Activated CD4-positive, alpha-beta memory T cell treated with anti-CD3 and anti-CD28 coated beads for 36 hours (primary cell): ENCODE measurements at regions of chr12 and their contacts with region 1.

Region 1: GRCh38 chr12:109385339-109386067 is 37.8 kb downstream of the MYO1H start:
- DNase-seq: peak; percentile 11
- H3K4me3 Mint-ChIP-seq: no peak overlapping the region
- H3K27ac Mint-ChIP-seq: no peak overlapping the region
- H3K4me1 Mint-ChIP-seq: no peaks in the 10 kb centered on the region
- H3K27me3 Mint-ChIP-seq: peaks cover 21% of the 10 kb centered on the region

Region 2: DNA sequence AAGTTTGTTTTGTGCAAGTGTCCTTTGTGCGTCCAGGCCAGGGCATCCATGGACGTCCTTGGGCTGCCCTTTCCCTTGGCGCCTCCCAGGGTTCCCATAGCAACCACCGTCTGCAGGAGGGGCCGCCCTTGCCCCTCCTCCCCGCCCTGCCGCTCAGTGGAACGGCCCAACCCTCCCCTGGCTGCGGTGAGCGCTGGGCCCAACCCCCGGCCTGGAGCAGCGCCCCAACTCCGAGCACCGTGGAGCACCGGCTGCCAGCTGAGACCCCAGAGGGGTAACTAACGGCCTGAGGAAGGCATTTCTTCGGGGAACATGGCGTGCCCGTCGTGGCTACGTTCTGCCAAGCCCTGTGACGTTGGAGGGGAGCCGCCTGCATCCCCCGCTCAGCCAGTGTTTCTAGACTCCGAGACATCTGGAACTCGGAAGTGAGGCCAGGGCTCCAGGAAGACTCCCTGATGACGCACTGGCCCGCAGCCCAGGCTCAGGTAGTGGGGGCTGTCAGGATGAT is 274.5 kb before region 1 on chr12:
- CTCF ChIA-PET with region 1: interaction called, 20 read pairs
- POLR2A ChIA-PET with region 1: no interaction called
- intact Hi-C with region 1: loop called (anchors 5 kb)
- DNase-seq: peak; percentile 67
- H3K4me3 Mint-ChIP-seq: peak overlapping the region; percentile 64
- H3K27ac Mint-ChIP-seq: peak overlapping the region; percentile 40
- H3K4me1 Mint-ChIP-seq: peaks cover 14% of the 10 kb centered on the region
- H3K27me3 Mint-ChIP-seq: no peaks in the 10 kb centered on the region

Region 3: DNA sequence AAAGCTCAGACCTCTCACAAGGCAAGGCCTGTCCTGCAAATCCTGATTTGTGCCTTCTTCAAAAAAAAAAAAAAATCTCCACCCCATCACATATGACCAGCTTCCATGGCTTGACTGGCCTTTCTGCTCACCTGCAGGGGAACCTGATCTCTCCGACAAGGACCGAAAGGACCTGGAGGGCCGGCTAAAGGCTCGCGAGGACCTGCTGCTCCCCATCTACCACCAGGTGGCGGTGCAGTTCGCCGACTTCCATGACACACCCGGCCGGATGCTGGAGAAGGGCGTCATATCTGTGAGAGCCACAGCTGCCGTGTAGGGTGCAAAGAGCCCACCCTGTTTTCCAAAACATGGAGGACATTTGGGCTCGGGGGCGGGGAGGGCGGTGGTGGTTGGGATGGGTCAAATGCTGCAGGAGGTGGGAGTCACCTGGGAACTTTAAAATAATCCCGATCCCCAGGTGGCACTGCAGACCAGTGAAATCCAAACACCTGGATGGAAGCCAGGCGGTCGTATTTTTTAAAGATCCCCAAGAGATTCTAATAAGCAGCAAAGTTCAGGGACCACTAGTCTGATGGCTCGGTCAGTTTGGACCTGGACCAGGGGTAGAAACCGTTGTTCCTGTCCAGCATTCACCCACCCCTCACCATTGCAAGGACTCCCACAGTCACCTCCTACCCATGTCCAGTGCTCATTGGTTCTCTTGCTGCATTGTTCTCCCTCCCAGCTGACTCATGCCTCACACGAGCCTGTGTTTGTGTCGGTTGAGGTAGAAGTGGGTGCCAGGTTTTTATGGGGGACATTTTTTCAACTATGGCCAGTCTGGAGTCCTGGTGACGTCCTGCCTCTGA is 121.2 kb before region 1 on chr12:
- CTCF ChIA-PET with region 1: interaction called, 32 read pairs
- POLR2A ChIA-PET with region 1: no interaction called
- intact Hi-C with region 1: loop called (anchors 1 kb)
- DNase-seq: peak; percentile 73
- H3K4me3 Mint-ChIP-seq: no peak overlapping the region
- H3K27ac Mint-ChIP-seq: no peak overlapping the region
- H3K4me1 Mint-ChIP-seq: no peaks in the 10 kb centered on the region
- H3K27me3 Mint-ChIP-seq: no peaks in the 10 kb centered on the region

Region 4: DNA sequence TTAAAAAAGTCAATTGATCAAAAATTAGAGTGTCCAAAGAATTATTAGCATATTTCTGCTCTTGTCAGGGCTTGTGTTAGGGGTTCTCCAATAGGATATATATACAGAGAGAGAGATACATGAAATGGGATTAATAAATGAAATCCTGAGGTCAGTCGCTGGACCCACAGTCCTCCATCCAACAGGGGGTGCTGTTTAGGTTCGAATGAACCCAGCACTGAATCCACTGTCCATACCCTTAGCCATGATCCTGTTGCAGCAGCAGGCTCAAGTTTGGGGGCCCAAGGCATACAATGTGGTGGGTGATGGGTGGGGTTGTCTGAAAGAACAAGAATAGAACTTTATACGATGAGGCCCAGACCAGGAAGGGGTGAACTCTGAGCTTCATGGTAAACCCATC is 38.6 kb before region 1 on chr12:
- CTCF ChIA-PET with region 1: interaction called, 6 read pairs
- POLR2A ChIA-PET with region 1: no interaction called
- intact Hi-C with region 1: loop called (anchors 5 kb)
- DNase-seq: peak; percentile 15
- H3K4me3 Mint-ChIP-seq: no peak overlapping the region
- H3K27ac Mint-ChIP-seq: no peak overlapping the region
- H3K4me1 Mint-ChIP-seq: no peaks in the 10 kb centered on the region
- H3K27me3 Mint-ChIP-seq: peaks cover 8% of the 10 kb centered on the region